Activated CD4-positive, alpha-beta T cell treated with anti-CD3 and anti-CD28 coated beads, Interleukin-2, amount 10 ng/mL, durations not matched to agents 7 days and 5 days (primary cell): ENCODE measurements at regions of chr19 and their contacts with region 1.

Region 1: GRCh38 chr19:4183967-4184717 is 1.7 kb downstream of the ANKRD24 start:
- DNase-seq: no peak
- H3K4me3 Mint-ChIP-seq: peak overlapping the region; percentile 51
- H3K27ac Mint-ChIP-seq: no peak overlapping the region
- H3K4me1 Mint-ChIP-seq: peaks cover 41% of the 10 kb centered on the region
- H3K27me3 Mint-ChIP-seq: no peaks in the 10 kb centered on the region

Region 2: GRCh38 chr19:4149518-4150288 is 34.4 kb before region 1 on chr19:
- CTCF ChIA-PET with region 1: no interaction called
- POLR2A ChIA-PET with region 1: no interaction called
- DNase-seq: no peak
- H3K4me3 Mint-ChIP-seq: no peak overlapping the region
- H3K27ac Mint-ChIP-seq: no peak overlapping the region
- H3K4me1 Mint-ChIP-seq: peaks cover 8% of the 10 kb centered on the region
- H3K27me3 Mint-ChIP-seq: peaks cover 5% of the 10 kb centered on the region

Region 3: DNA sequence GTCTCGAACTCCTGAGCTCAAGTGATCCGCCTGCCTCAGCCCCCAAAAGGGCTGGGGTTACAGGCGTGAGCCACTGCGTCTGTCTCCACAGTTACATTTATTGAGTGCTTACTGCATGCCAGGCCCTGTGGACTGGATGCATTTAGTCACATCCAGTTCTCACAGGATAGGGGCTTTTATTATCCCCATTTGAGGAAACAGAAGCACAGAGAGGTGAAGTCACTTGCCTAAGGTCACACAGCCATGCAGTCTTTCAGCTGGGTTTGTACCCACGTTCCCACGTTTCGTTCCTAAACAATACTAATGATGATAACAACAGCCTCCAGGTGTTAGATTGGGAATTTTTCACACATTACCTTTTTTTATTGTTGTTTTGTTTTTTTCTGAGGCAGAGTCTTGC is 36.0 kb after region 1 on chr19:
- CTCF ChIA-PET with region 1: interaction called, 3 read pairs
- POLR2A ChIA-PET with region 1: interaction called, 11 read pairs
- DNase-seq: no peak
- H3K4me3 Mint-ChIP-seq: no peak overlapping the region
- H3K27ac Mint-ChIP-seq: no peak overlapping the region
- H3K4me1 Mint-ChIP-seq: no peaks in the 10 kb centered on the region
- H3K27me3 Mint-ChIP-seq: no peaks in the 10 kb centered on the region